Body of pancreas (tissue), 4 donors: ENCODE measurements at regions of chr14 and their contacts with region 1.

Region 1: GRCh38 chr14:94559638-94560290 is 1.5 kb upstream of the SERPINA4 start:
- DNase-seq: no peak
- ATAC-seq: no peak
- H3K4me3 ChIP-seq: no peak overlapping the region
- H3K27ac ChIP-seq: no peak overlapping the region
- H3K4me1 ChIP-seq: peaks cover 49% of the 10 kb centered on the region
- H3K27me3 ChIP-seq: no peaks in the 10 kb centered on the region
- CTCF ChIP-seq: no peak
- POLR2A ChIP-seq: no peak

Region 2: GRCh38 chr14:94423453-94424056 is 136.2 kb before region 1 on chr14:
- intact Hi-C with region 1: no loop called
- DNase-seq: peak; percentile 78 to 86 (median 80)
- ATAC-seq: peak; percentile 81
- H3K4me3 ChIP-seq: no peak overlapping the region
- H3K27ac ChIP-seq: no peak overlapping the region
- H3K4me1 ChIP-seq: no peaks in the 10 kb centered on the region
- H3K27me3 ChIP-seq: no peaks in the 10 kb centered on the region
- CTCF ChIP-seq: peak; percentile 42 to 71 (median 67)
- POLR2A ChIP-seq: no peak

Region 3: GRCh38 chr14:94612174-94612573 is 52.4 kb after region 1 on chr14 and contains the start of gene SERPINA3:
- intact Hi-C with region 1: loop called (anchors 10 kb)
- DNase-seq: peak; percentile 55 to 83 (median 69)
- ATAC-seq: peak; percentile 67
- H3K4me3 ChIP-seq: peak within 1 kb of the TSS in 1 of 2 donors; percentile 42
- H3K27ac ChIP-seq: peak within 1 kb of the TSS; percentile 78 to 87 (median 84)
- H3K4me1 ChIP-seq: peaks cover 68% of the 10 kb centered on the region
- H3K27me3 ChIP-seq: no peaks in the 10 kb centered on the region
- CTCF ChIP-seq: no peak
- POLR2A ChIP-seq: peak; percentile 45 to 98 (median 98)
- total RNA-seq, gene SERPINA3: 396 to 1,783 TPM

Region 4: DNA sequence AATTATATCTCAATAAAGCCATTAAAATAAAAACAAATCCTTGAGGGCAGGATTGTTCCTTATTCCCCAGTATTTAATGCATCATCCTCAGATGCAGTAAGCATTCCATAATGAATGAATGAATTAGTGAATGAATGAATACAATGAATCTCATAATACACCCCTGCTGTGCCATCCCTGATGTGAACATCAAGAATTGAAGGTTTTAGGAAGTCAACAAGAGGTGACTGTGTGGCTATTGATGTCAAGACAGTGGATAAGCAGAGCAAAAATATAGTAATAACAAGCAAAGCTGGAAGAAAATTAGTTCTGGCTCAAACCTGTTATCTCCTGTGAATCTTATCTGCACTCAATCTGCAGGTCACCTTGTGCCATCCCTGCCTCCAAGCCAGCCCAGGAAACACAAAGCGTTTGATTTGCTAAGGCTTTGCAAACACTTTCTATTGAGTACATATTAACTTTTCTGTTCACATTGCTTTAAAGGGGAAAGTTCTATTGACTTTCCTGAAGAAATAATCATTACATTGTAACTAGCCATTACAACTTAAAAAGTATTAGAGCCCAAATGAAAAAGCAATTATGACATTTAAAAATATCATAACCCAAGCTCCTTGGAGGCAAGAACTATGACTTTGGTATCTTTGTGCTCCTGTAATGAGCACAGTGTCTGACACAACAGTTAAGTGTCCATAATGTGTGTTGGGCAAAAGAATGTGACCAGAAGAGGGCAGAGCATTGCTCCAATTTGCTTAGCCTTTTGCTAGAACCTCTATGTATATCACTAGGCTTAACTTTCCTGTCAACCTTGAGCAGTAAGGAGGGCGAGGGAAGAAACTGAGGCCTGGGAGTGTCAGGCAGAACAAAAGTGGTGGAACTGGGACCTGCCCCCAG is 77.0 kb after region 1 on chr14:
- intact Hi-C with region 1: no loop called
- DNase-seq: no peak
- ATAC-seq: peak; percentile 68
- H3K4me3 ChIP-seq: no peak overlapping the region
- H3K27ac ChIP-seq: peak overlapping the region in 2 of 4 donors; percentile 8 to 18
- H3K4me1 ChIP-seq: peaks cover 8% of the 10 kb centered on the region
- H3K27me3 ChIP-seq: no peaks in the 10 kb centered on the region
- CTCF ChIP-seq: peak in 4 of 7 experiments; percentile 25 to 41 (median 32)
- POLR2A ChIP-seq: no peak